ENCODE measurements at regions of chr11 and their contacts with region 1.

Region 1: DNA sequence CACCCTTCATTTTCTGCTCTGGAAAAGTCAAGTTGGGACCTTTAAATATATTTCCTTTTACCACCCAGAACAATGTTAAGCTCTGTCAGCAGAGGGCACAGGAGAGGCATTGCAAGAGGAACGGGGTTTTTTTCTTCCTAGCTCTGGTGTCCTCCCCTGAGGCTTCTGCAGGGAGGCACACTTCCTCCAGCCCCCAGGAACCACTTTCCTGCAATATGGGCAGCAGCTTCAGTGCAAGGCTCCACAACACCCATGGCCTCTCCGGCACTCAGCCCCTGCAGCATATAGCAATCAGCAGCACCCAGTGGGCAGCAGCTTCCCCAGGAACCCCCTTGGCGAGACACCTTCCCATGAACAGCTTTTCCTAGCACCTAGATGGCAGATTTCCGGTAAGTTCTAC is 101.4 kb downstream of the SYT9 start:
- DNase-seq: peak; percentile 26
- ATAC-seq: peak; percentile 74
- H3K4me3 ChIP-seq: no peak overlapping the region
- H3K27ac ChIP-seq: no peak overlapping the region
- H3K4me1 ChIP-seq: no peaks in the 10 kb centered on the region
- H3K27me3 ChIP-seq: no peaks in the 10 kb centered on the region
- CTCF ChIP-seq: peak; percentile 67
- EP300 ChIP-seq: no peak
- POLR2A ChIP-seq: no peak
- RAD21 ChIP-seq: peak; percentile 39; the same call in 1 of the 2 replicates

Region 2: GRCh38 chr11:7442588-7443215 is 89.6 kb after region 1 on chr11:
- CTCF ChIA-PET with region 1: interaction called, 8 read pairs
- POLR2A ChIA-PET with region 1: no interaction called
- in situ Hi-C with region 1: loop called (anchors 5 kb)
- intact Hi-C with region 1: loop called (anchors 1 kb)
- DNase-seq: peak; percentile 43
- ATAC-seq: peak; percentile 93
- H3K4me3 ChIP-seq: no peak overlapping the region
- H3K27ac ChIP-seq: no peak overlapping the region
- H3K4me1 ChIP-seq: no peaks in the 10 kb centered on the region
- H3K27me3 ChIP-seq: peaks cover 0 to 5% of the 10 kb centered on the region in 2 experiments; a peak in 2 of 5 replicates
- CTCF ChIP-seq: peak; percentile 86
- EP300 ChIP-seq: no peak
- POLR2A ChIP-seq: no peak
- RAD21 ChIP-seq: peak; percentile 43; the same call in 1 of the 2 replicates

Region 3: DNA sequence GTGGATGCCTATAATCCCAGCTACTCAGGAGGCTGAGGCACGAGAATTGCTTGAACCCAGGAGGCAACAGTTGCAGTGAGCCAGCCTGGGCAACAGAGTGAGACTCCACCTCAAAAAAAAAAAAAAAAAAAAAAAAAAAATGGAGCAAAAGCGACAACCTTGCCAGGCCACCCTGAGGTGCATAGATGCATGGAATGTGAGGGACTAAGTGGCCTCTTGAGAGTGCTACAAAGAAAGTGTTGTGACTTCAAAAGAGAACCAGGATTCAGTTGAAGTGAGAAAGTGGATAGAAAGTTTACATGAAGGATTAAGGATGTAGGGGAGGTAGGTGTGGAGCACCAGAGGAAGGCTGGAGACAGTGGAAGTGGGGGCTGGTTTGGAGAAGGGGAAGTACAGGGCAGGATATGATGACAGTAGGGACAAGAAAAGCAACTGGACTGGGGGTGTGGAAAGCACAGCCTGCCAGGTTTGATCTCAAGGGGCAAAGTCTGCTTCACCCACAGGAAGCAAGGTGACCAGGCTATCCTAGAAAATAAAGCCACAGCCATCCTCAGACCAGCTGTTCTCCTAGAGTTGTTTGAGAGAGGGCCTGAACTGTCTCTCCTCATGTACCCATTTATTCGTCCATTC is 96.2 kb after region 1 on chr11:
- CTCF ChIA-PET with region 1: no interaction called
- POLR2A ChIA-PET with region 1: no interaction called
- in situ Hi-C with region 1: loop called (anchors 5 kb)
- intact Hi-C with region 1: no loop called
- DNase-seq: no peak
- ATAC-seq: no peak
- H3K4me3 ChIP-seq: no peak overlapping the region
- H3K27ac ChIP-seq: no peak overlapping the region
- H3K4me1 ChIP-seq: no peaks in the 10 kb centered on the region
- H3K27me3 ChIP-seq: peaks cover 0 to 10% of the 10 kb centered on the region in 2 experiments; a peak in 1 of 5 replicates
- CTCF ChIP-seq: no peak
- EP300 ChIP-seq: no peak
- POLR2A ChIP-seq: no peak
- RAD21 ChIP-seq: no peak

Region 4: GRCh38 chr11:7665473-7666291 is 312.6 kb after region 1 on chr11:
- CTCF ChIA-PET with region 1: interaction called, 7 read pairs
- POLR2A ChIA-PET with region 1: no interaction called
- in situ Hi-C with region 1: no loop called
- intact Hi-C with region 1: loop called (anchors 2 kb)
- DNase-seq: peak; percentile 65
- ATAC-seq: peak; percentile 98
- H3K4me3 ChIP-seq: no peak overlapping the region
- H3K27ac ChIP-seq: no peak overlapping the region
- H3K4me1 ChIP-seq: 0 out of 2 replicates have a peak, but pooled peaks cover 8% of the 10 kb centered on the region
- H3K27me3 ChIP-seq: no peaks in the 10 kb centered on the region
- CTCF ChIP-seq: peak; percentile 98
- EP300 ChIP-seq: no peak
- POLR2A ChIP-seq: no peak
- RAD21 ChIP-seq: peak; percentile 93

Region 5: GRCh38 chr11:7688238-7688826 is 335.2 kb after region 1 on chr11:
- CTCF ChIA-PET with region 1: no interaction called
- POLR2A ChIA-PET with region 1: no interaction called
- in situ Hi-C with region 1: loop called (anchors 25 kb)
- intact Hi-C with region 1: loop called (anchors 2 kb)
- DNase-seq: peak; percentile 16
- ATAC-seq: peak; percentile 38; the same call in 2 of the 3 replicates
- H3K4me3 ChIP-seq: no peak overlapping the region
- H3K27ac ChIP-seq: no peak overlapping the region
- H3K4me1 ChIP-seq: peaks cover 8% of the 10 kb centered on the region; the same call in 1 of the 2 replicates
- H3K27me3 ChIP-seq: peaks cover 0 to 25% of the 10 kb centered on the region in 2 experiments; a peak in 2 of 5 replicates
- CTCF ChIP-seq: peak; percentile 64
- EP300 ChIP-seq: no peak
- POLR2A ChIP-seq: no peak
- RAD21 ChIP-seq: no peak